ENCODE measurements at regions of chr20 and their contacts with region 1.

Region 1: DNA sequence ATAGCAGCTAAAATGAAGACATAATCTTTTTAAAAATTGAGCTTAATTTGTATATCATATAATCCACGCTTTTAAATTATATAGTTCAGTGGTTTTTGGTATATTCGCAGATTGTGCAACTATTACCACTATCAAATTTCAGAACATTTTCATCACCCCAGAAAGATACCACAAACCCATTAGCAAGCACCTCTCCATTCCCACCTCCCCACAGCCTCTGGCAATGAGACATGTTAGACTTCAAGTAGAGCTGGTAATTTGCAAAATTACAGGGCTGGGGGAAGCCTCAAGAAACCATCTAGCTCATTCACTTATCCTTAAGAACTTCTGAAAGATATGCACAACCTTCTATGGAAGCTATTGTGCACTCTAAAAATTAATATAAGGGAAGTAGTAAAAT is 37.2 kb downstream of the TRMT6 start:
- DNase-seq: no peak
- ATAC-seq: no peak
- H3K4me3 ChIP-seq: no peak overlapping the region
- H3K4me3 Mint-ChIP-seq: no peak overlapping the region
- H3K27ac ChIP-seq: no peak overlapping the region
- H3K27ac Mint-ChIP-seq: no peak overlapping the region
- H3K4me1 ChIP-seq: peaks cover 5 to 10% of the 10 kb centered on the region in 2 experiments
- H3K4me1 Mint-ChIP-seq: peaks cover 7 to 16% (median 14%) of the 10 kb centered on the region in 3 donors
- H3K27me3 ChIP-seq: peaks cover 5 to 26% of the 10 kb centered on the region in 2 experiments
- H3K27me3 Mint-ChIP-seq: peaks cover 46 to 54% of the 10 kb centered on the region in 2 donors

Region 2: GRCh38 chr20:5602346-5602745 is 310.8 kb before region 1 on chr20:
- CTCF ChIA-PET with region 1: interaction called in 1 of 2 experiments, 11 read pairs
- POLR2A ChIA-PET with region 1: no interaction called
- DNase-seq: no peak
- ATAC-seq: no peak
- H3K4me3 ChIP-seq: no peak overlapping the region
- H3K4me3 Mint-ChIP-seq: no peak overlapping the region
- H3K27ac ChIP-seq: no peak overlapping the region
- H3K27ac Mint-ChIP-seq: peak overlapping the region; percentile 65
- H3K4me1 ChIP-seq: peaks cover 24 to 38% of the 10 kb centered on the region in 2 experiments
- H3K4me1 Mint-ChIP-seq: peaks cover 69 to 78% (median 76%) of the 10 kb centered on the region in 3 donors
- H3K27me3 ChIP-seq: no peaks in the 10 kb centered on the region
- H3K27me3 Mint-ChIP-seq: no peaks in the 10 kb centered on the region

Region 3: GRCh38 chr20:6008254-6008653 is 95.1 kb after region 1 on chr20:
- CTCF ChIA-PET with region 1: no interaction called
- POLR2A ChIA-PET with region 1: interaction called in 1 of 2 experiments, 12 read pairs
- DNase-seq: no peak
- ATAC-seq: no peak
- H3K4me3 ChIP-seq: no peak overlapping the region
- H3K4me3 Mint-ChIP-seq: peak overlapping the region in 2 of 3 donors; percentile 36 to 92
- H3K27ac ChIP-seq: no peak overlapping the region
- H3K27ac Mint-ChIP-seq: no peak overlapping the region
- H3K4me1 ChIP-seq: peaks cover 13 to 22% of the 10 kb centered on the region in 2 experiments
- H3K4me1 Mint-ChIP-seq: peaks cover 46 to 49% (median 47%) of the 10 kb centered on the region in 3 donors
- H3K27me3 ChIP-seq: no peaks in the 10 kb centered on the region
- H3K27me3 Mint-ChIP-seq: no peaks in the 10 kb centered on the region

Measured in T-cell (primary cell).